Activated CD8-positive, alpha-beta T cell treated with anti-CD3 and anti-CD28 coated beads for 36 hours (primary cell): ENCODE measurements at regions of chr1 and their contacts with region 1.

Region 1: DNA sequence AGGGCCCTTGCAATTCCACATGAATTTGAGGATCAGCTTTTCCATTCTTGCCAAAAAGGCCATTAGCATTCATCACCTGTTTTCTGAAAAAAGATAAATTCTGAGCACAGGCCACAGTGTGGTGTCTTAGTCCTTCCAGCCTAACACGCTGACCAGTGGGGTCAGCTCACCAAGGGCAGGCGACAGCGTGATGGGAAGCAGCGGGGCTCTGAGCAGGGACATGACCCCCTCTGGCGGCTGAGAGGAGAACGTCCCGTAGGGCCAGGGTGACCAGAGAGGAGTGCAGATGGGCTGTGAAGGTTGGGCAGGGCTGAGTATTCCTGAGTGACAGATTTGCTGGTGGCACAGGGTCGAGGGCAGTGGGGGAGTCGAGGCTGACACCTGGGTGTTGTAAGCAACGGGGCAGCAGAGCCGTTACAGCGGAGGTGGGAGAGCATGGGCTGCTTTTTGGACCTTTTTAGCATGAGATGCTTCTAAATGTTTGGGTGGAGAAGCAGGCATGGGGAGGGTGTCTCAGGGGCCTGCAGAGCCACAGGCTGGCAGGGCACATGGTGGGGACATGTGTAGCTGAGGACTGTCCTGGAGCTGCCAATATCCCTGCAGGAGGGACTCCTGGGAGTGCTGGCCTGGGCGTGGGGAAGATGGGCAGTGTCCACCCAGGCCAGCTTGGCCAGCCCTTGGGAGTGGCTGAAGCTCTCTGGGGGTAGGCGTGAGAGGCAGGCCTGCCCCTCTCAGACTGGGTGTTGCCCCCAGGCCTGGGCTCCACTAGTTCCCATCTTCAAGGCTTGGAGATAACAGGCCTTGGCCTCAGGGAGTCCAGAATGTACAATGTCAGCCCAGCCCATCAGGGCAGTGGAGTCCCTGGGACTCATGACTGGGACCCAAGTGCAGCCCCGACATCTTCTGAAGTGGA is 8.6 kb upstream of the CALML6 start:
- DNase-seq: peak; percentile 80
- ATAC-seq: peak; percentile 41
- H3K4me3 Mint-ChIP-seq: peak overlapping the region; percentile 14
- H3K27ac Mint-ChIP-seq: no peak overlapping the region
- H3K4me1 Mint-ChIP-seq: peaks cover 13% of the 10 kb centered on the region
- H3K27me3 Mint-ChIP-seq: no peaks in the 10 kb centered on the region
- CTCF ChIP-seq: peak; percentile 96

Region 2: GRCh38 chr1:1778663-1779447 is 127.6 kb before region 1 on chr1:
- CTCF ChIA-PET with region 1: interaction called, 18 read pairs
- POLR2A ChIA-PET with region 1: interaction called, 5 read pairs
- intact Hi-C with region 1: no loop called
- DNase-seq: peak; percentile 90
- ATAC-seq: peak; percentile 68
- H3K4me3 Mint-ChIP-seq: peak overlapping the region; percentile 49
- H3K27ac Mint-ChIP-seq: peak overlapping the region; percentile 89
- H3K4me1 Mint-ChIP-seq: peaks cover 66% of the 10 kb centered on the region
- H3K27me3 Mint-ChIP-seq: no peaks in the 10 kb centered on the region
- CTCF ChIP-seq: peak; percentile 26

Region 3: GRCh38 chr1:1796466-1796865 is 110.0 kb before region 1 on chr1:
- CTCF ChIA-PET with region 1: interaction called, 10 read pairs
- POLR2A ChIA-PET with region 1: no interaction called
- intact Hi-C with region 1: no loop called
- DNase-seq: peak; percentile 17
- ATAC-seq: peak; percentile 73
- H3K4me3 Mint-ChIP-seq: no peak overlapping the region
- H3K27ac Mint-ChIP-seq: peak overlapping the region; percentile 25
- H3K4me1 Mint-ChIP-seq: peaks cover 17% of the 10 kb centered on the region
- H3K27me3 Mint-ChIP-seq: no peaks in the 10 kb centered on the region
- CTCF ChIP-seq: peak; percentile 15

Region 4: DNA sequence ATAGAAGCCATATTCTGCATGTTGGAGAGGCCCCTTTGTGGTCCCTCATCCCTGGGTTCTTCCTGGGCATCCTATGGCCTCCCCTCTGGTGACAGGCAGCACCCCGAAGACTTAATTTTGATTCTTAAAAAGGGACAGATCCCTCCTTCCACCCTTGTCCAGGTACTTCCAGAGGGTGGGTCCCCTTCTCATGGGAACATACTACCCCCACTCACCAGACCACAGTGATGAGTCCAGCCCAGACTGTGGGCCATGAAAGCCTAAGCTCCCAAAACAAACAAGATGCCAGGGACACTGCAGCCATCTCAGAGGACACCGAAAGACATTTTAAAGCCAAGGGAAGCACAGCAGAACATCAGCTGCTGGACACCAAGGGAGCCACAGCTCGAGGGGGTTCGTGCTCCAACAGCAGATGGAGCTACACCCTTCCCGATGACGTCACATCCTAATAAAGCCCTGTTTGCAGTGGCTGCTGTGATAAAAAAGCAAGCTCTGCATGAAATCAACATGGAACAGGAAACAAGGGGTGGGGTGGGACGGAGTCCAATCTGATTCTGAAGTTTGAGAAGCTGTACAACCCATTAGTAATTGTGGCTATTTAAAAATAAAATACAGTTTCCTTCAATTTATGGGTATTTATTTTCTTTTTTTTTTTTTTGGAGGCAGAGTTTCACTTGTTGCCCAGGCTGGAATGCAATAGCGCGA is 47.9 kb before region 1 on chr1:
- CTCF ChIA-PET with region 1: interaction called, 10 read pairs
- POLR2A ChIA-PET with region 1: interaction called, 3 read pairs
- intact Hi-C with region 1: no loop called
- DNase-seq: peak; percentile 18
- ATAC-seq: no peak
- H3K4me3 Mint-ChIP-seq: no peak overlapping the region
- H3K27ac Mint-ChIP-seq: peak overlapping the region; percentile 54
- H3K4me1 Mint-ChIP-seq: peaks cover 66% of the 10 kb centered on the region
- H3K27me3 Mint-ChIP-seq: no peaks in the 10 kb centered on the region
- CTCF ChIP-seq: no peak

Region 5: DNA sequence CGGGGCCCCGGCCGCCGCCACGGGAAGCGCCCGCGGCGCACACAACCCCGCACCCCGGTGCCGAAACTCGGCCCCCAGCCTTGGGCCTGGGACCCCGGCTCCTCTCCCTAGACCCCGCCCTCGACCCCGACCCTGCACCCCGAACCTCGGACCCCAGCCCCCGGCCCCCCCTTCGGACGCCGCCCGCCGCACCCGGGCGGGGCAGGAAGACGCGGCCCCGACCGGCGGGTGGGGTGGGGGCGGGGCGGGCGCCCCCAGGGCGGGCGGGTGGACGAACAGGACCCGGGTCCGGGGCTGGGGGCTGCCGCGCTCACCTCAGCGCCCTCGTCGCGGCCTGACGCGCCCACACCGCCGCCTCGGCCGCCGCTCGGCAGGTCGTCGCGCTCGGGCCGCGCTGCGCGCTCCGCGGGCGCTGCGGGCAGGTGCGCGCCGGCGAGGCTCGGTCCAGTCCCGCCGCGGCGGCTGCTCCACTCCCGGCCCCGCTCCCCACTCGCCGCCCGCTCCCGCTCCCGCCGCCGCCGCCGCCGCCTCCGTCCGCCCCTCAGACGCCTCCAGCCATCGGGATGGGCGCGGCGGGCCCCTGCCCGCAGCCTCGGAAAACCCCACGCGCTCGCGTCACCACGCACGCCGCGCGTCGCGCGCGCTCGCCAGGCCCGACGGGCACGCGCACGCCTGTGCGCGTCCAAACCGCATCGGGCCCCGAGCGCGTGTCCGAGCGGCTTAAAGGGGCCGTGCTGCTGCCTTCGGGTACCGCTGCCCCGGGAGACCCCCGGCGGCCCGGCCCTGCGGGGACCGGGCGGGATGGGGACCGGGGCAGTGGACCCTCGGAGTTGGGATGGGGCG is 15.7 kb before region 1 on chr1 and contains the start of gene GNB1:
- CTCF ChIA-PET with region 1: interaction called, 80 read pairs
- POLR2A ChIA-PET with region 1: interaction called, 9 read pairs
- intact Hi-C with region 1: no loop called
- DNase-seq: peak; percentile 84
- ATAC-seq: peak; percentile 51
- H3K4me3 Mint-ChIP-seq: peak within 1 kb of the TSS; percentile 85
- H3K27ac Mint-ChIP-seq: peak within 1 kb of the TSS; percentile 90
- H3K4me1 Mint-ChIP-seq: peaks cover 52% of the 10 kb centered on the region
- H3K27me3 Mint-ChIP-seq: peaks cover under 1% of the 10 kb centered on the region
- CTCF ChIP-seq: no peak
- total RNA-seq, gene GNB1: 318 to 330 TPM

Region 6: GRCh38 chr1:2163205-2163604 is 256.8 kb after region 1 on chr1:
- CTCF ChIA-PET with region 1: no interaction called
- POLR2A ChIA-PET with region 1: no interaction called
- intact Hi-C with region 1: no loop called
- DNase-seq: peak; percentile 46
- ATAC-seq: peak; percentile 51
- H3K4me3 Mint-ChIP-seq: no peak overlapping the region
- H3K27ac Mint-ChIP-seq: no peak overlapping the region
- H3K4me1 Mint-ChIP-seq: peaks cover 11% of the 10 kb centered on the region
- H3K27me3 Mint-ChIP-seq: no peaks in the 10 kb centered on the region
- CTCF ChIP-seq: peak; percentile 28